Cardiac septum (tissue), 1 donor: ENCODE measurements at regions of chr1 and their contacts with region 1.

Region 1: GRCh38 chr1:172699111-172699510 is 40.2 kb downstream of the FASLG start:
- DNase-seq: no peak

Region 2: DNA sequence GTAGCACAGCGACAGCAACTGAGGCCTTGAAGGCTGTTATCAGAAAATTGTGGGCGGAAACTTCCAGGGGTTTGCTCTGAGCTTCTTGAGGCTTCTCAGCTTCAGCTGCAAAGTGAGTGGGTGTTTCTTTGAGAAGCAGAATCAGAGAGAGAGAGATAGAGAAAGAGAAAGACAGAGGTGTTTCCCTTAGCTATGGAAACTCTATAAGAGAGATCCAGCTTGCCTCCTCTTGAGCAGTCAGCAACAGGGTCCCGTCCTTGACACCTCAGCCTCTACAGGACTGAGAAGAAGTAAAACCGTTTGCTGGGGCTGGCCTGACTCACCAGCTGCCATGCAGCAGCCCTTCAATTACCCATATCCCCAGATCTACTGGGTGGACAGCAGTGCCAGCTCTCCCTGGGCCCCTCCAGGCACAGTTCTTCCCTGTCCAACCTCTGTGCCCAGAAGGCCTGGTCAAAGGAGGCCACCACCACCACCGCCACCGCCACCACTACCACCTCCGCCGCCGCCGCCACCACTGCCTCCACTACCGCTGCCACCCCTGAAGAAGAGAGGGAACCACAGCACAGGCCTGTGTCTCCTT is 40.1 kb before region 1 on chr1 and contains the start of gene FASLG:
- intact Hi-C with region 1: loop called (anchors 5 kb)
- DNase-seq: no peak
- total RNA-seq, gene FASLG: 0.27 TPM

Region 3: GRCh38 chr1:172789866-172790644 is 90.9 kb after region 1 on chr1:
- intact Hi-C with region 1: no loop called
- DNase-seq: no peak